ENCODE measurements at regions of chr19 and their contacts with region 1.

Region 1: GRCh38 chr19:2867025-2867991 is at the start of gene ZNF556:
- DNase-seq: no peak
- H3K4me3 ChIP-seq: no peak within 1 kb of the TSS
- H3K4me3 Mint-ChIP-seq: no peak within 1 kb of the TSS
- H3K27ac ChIP-seq: no peak within 1 kb of the TSS
- H3K27ac Mint-ChIP-seq: no peak within 1 kb of the TSS
- H3K4me1 ChIP-seq: no peaks in the 10 kb centered on the region
- H3K4me1 Mint-ChIP-seq: peaks cover 0 to 4% (median 2%) of the 10 kb centered on the region in 4 donors
- H3K27me3 ChIP-seq: no peaks in the 10 kb centered on the region
- H3K27me3 Mint-ChIP-seq: peaks cover 6% of the 10 kb centered on the region in 2 donors
- total RNA-seq, gene ZNF556: not detected

Region 2: GRCh38 chr19:2820112-2820702 is 47.1 kb before region 1 on chr19:
- CTCF ChIA-PET with region 1: interaction called, 4 read pairs
- POLR2A ChIA-PET with region 1: interaction called, 3 read pairs
- intact Hi-C with region 1: loop called (anchors 1 kb)
- DNase-seq: no peak
- H3K4me3 ChIP-seq: peak overlapping the region; percentile 51 to 69
- H3K4me3 Mint-ChIP-seq: peak overlapping the region; percentile 76 to 87 (median 84)
- H3K27ac ChIP-seq: peak overlapping the region; percentile 33
- H3K27ac Mint-ChIP-seq: peak overlapping the region in 1 of 7 donors; percentile 70
- H3K4me1 ChIP-seq: peaks cover 8% of the 10 kb centered on the region
- H3K4me1 Mint-ChIP-seq: peaks cover 4 to 18% (median 4%) of the 10 kb centered on the region in 4 donors
- H3K27me3 ChIP-seq: no peaks in the 10 kb centered on the region
- H3K27me3 Mint-ChIP-seq: no peaks in the 10 kb centered on the region

Region 3: DNA sequence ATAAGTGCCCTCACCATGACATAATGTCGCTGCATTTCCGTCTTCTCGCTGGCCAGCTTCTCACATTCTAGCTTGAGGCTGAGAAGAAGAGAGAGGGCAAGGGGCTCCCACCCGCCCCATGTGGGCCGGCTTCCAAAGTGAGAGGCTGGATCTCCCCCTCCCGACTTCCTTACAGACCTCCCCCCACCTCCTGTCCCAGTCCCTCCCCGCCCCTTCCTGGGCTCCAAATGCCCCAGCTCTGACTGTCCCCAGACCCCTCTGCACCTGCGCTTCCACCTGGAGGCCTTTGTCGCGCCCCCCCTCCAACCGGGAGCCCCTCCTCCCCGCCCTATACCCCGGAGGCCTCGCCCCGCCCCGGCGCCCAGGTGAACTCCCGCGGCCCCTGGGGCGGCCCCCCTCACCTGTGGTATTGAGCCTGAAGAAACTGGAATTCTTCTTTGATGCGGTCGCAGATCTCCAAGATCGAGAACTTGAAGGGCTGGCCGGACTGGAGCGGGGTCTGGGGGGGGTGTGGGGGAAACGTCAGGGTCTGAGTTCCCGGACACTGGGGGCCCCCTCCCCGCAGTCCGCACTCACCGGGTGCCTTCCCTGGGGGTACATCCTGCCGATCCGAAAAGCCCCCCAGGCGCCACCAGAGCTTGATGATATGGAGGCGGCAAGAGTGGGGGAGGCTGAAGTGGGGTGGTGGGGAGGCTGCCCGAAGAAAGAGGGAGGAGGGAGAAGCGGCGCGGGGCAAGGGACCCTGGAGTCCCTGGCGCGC is 161.2 kb after region 1 on chr19:
- CTCF ChIA-PET with region 1: no interaction called
- POLR2A ChIA-PET with region 1: no interaction called
- intact Hi-C with region 1: no loop called
- DNase-seq: peak in 2 of 5 donors; percentile 14 to 55
- H3K4me3 ChIP-seq: peak overlapping the region in 1 of 2 donors; percentile 41
- H3K4me3 Mint-ChIP-seq: peak overlapping the region; percentile 64 to 85 (median 78)
- H3K27ac ChIP-seq: no peak overlapping the region
- H3K27ac Mint-ChIP-seq: peak overlapping the region in 5 of 7 donors; percentile 30 to 43 (median 36)
- H3K4me1 ChIP-seq: peaks cover 23% of the 10 kb centered on the region
- H3K4me1 Mint-ChIP-seq: peaks cover 8 to 33% (median 22%) of the 10 kb centered on the region in 4 donors
- H3K27me3 ChIP-seq: no peaks in the 10 kb centered on the region
- H3K27me3 Mint-ChIP-seq: no peaks in the 10 kb centered on the region

Measured in CD4-positive, alpha-beta memory T cell (primary cell).